Common myeloid progenitor, CD34-positive (primary cell): ENCODE measurements at regions of chr14 and their contacts with region 1.

Region 1: DNA sequence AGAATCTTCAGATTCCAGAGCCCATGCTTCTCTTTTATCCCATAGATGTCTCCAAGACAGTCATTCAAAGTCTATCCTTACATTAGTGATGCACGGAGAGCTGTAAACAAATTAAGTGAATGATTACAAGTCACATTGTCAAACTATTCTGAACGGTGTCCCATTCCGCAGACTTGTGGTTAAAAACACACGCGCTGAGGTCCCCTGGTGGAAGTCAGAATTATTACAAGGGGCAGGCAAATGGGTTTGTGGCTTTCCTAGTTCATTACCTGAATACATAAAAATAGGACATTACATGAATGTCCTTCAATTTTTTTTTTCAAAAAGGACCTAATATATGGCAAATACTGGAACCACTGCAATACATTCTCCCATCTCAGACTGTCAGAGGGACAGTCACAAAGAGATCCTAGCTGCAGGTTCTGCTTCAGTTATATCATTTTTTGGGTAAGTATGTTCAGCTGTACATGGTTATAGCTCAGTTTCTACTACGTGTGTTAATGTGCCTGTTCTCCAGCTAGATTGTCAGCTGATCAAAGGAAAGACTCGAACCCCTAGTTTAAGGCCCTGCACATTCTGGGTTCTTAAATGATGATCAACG is 53.1 kb upstream of the STON2 start:
- DNase-seq: peak; percentile 66 to 78 (median 72)
- H3K4me3 ChIP-seq: peak overlapping the region in 1 of 7 experiments; percentile 11
- H3K27ac ChIP-seq: no peak overlapping the region
- H3K4me1 ChIP-seq: peaks cover 0 to 15% (median 1%) of the 10 kb centered on the region in 4 experiments
- H3K27me3 ChIP-seq: no peaks in the 10 kb centered on the region

Region 2: GRCh38 chr14:81436296-81437138 is 16.7 kb before region 1 on chr14:
- CTCF ChIA-PET with region 1: interaction called, 36 read pairs
- POLR2A ChIA-PET with region 1: no interaction called
- DNase-seq: peak; percentile 75 to 82 (median 76)
- H3K4me3 ChIP-seq: peak overlapping the region; percentile 36 to 87 (median 75)
- H3K27ac ChIP-seq: no peak overlapping the region
- H3K4me1 ChIP-seq: peaks cover 11 to 50% (median 23%) of the 10 kb centered on the region in 4 experiments
- H3K27me3 ChIP-seq: no peaks in the 10 kb centered on the region

Region 3: DNA sequence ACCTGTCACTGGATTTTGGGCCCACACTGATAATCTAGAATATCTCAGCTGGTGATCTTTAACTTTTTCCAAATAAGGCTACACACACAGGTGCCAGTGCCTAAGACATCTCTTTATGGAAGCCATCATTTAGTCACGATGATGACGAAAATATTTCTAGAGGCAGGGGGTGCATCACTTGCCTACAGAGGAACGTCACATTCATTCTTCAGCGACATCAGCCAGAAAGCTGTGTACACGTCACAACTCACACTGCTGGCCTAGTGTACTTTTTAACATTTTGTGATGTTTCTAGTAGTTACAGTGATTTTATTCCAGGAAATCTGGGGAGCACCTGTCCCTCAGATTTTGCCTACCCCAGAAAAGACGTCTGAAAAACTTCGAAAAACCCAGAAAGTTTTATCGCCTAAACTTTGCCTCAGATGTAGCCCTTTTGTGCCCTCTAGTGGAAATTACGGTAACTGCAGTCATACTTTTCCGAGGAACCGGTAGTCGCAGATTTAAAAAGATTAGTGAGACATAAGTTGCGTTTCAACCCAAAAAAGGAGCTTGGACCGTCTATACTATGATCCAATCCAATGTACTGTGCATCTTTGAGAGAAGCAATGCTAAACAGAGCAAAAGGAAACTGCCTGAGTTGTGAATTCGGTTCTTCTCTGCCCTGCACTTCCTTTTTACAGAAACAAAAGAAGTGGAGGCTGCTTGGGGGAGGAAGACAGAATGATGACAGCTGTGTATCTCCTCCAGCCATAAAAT is 11.2 kb after region 1 on chr14:
- CTCF ChIA-PET with region 1: interaction called, 28 read pairs
- POLR2A ChIA-PET with region 1: no interaction called
- DNase-seq: peak; percentile 68 to 84 (median 77)
- H3K4me3 ChIP-seq: peak overlapping the region in 6 of 7 experiments; percentile 58 to 98 (median 88)
- H3K27ac ChIP-seq: peak overlapping the region in 1 of 2 experiments; percentile 67
- H3K4me1 ChIP-seq: peaks cover 0 to 4% (median 4%) of the 10 kb centered on the region in 4 experiments
- H3K27me3 ChIP-seq: no peaks in the 10 kb centered on the region

Region 4: GRCh38 chr14:81519200-81520011 is 66.1 kb after region 1 on chr14:
- CTCF ChIA-PET with region 1: no interaction called
- POLR2A ChIA-PET with region 1: no interaction called
- DNase-seq: peak; percentile 87 to 96 (median 93)
- H3K4me3 ChIP-seq: peak overlapping the region in 3 of 7 experiments; percentile 11 to 37 (median 14)
- H3K27ac ChIP-seq: peak overlapping the region; percentile 53 to 69
- H3K4me1 ChIP-seq: peaks cover 14 to 30% (median 25%) of the 10 kb centered on the region in 4 experiments
- H3K27me3 ChIP-seq: no peaks in the 10 kb centered on the region